GM13977 (cell line): ENCODE measurements at regions of chrX and their contacts with region 1.

Region 1: GRCh38 chrX:3713225-3713936 is at the start of gene PRKX:
- DNase-seq: peak; percentile 94
- CTCF ChIP-seq: no peak

Region 2: DNA sequence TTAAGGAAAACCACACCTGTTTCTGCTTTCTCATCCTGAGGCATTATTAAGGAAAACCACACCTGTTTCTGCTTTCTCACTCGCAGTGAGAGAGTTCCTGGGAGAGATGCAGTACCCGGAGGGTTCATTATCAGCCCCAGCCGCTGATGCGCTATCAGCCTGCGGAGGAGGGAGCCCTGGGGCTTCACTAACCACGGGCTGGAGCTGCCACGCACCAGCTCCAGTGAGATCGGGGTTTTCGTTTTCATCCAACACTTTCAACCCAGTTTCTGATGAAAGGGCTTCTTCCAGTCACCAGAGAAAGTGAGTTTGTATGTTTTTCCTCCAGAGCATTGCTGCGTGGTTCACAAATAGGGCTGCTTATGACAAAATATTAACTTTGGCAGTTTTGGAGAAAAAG is 93.2 kb after region 1 on chrX:
- in situ Hi-C with region 1: loop called (anchors 10 kb)
- DNase-seq: no peak
- CTCF ChIP-seq: no peak

Region 3: DNA sequence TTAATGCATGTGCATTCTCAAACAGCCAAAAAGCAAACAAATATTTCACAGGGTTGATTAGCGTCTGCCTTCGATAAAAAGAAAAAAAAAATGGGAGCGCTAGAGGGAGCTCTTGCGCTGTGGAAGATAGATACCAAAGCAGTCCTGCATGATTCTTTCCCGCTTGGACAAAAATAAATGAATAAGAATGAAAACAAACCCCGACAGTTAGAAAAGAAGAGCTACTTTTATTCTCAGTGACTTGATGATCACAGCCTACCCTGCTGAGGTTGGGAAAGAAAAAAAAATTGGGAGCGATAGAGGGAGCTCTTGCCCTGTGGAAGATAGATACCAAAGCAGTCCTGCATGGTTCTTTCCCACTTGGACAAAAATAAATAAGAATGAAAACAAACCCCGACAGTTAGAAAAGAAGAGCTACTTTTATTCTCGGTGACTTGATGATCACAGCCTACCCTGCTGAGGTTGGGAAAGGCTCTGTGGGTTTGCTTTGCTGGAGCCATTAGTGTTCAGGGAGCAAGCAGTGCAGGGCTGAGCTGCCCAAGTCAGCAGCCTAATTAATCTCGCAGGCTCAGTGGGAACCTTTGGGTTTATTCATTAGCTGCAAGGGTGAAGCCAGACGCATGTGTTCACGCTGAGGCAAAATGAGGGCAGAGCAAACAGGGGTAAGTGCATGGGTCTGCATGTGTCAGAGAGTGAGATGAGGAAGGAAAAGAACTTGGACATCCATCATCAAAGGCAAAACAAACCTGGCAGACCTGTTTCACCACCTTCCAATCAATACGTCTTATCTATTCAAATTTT is 249.3 kb after region 1 on chrX:
- in situ Hi-C with region 1: no loop called
- DNase-seq: no peak
- CTCF ChIP-seq: peak; percentile 51